ENCODE measurements at regions of chr17 and their contacts with region 1.

Region 1: DNA sequence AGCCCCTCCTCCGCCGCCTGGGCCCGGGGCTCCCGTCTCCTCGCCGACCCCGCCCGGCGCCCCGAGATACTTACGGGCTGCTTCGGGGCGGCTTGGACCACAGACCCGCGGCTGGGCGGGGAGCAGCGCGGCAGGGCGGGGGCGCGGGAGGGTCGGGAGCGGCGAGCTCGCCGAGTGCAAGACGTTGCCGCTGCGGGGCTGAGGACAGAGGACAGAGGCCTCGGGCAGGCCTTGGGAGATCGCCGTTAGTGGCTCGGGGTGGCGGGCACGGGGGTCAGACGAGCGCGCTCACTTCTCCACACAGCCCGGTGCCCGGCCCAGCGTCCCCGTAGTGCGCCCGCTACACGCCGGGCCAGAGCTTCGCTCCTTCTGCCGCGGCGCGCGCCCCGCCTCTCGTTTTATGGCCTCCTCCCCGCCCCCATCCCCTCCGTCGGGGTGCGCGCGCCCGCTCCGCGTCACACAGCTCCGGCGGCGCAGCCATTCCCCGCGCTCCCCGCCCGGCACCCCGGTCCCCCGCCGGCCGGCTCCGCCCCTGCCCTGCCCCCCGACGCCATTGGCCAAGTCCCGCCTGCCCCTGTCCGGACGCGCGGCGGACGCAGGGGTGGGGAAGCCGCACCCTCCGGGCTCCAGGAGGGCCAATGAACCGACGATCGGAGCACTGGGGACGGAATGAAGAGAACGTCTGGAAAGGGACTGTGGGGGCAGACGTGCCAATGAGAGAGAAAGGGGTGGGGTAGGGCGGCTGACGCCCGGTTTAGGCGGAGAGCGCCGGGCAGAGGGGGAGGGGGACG is at the start of gene TOB1:
- H3K4me3 Mint-ChIP-seq: peak within 1 kb of the TSS; percentile 94
- H3K27ac Mint-ChIP-seq: peak within 1 kb of the TSS; percentile 98
- H3K4me1 Mint-ChIP-seq: peaks cover 24% of the 10 kb centered on the region
- H3K27me3 Mint-ChIP-seq: no peaks in the 10 kb centered on the region

Region 2: DNA sequence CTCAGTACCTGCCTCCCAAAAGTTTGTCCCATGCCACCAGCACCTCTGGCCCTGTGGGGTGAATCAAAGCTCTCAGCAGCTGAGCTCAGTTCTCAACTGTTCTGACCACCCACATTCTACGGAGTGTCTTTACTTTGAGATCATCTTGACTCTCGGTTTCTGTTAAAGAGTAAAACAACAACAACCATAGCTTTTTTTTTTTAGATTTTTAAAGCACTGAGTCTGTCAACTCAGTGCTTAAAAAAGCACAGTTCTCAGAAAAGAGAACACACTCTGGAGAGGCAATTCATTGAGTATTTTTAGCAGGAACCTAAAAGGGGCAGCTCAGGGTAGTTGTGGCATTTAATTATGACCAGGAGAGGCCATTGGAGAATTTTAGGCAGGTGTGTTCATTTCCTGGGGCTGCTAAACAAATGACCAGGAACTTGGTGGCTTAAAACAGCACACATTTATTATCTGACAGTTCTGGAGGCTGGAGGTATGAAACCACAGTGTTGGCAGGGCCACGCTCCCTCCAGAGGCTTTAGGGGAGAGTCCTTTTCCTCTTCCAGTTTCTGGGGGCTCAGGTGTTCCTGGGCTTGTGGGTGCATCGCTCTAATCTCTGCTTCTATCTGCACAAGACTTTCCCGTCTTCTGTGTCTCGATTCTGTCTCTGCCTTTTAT is 37.5 kb before region 1 on chr17:
- intact Hi-C with region 1: no loop called
- H3K4me3 Mint-ChIP-seq: no peak overlapping the region
- H3K27ac Mint-ChIP-seq: peak overlapping the region; percentile 70
- H3K4me1 Mint-ChIP-seq: peaks cover 40% of the 10 kb centered on the region
- H3K27me3 Mint-ChIP-seq: no peaks in the 10 kb centered on the region

Region 3: DNA sequence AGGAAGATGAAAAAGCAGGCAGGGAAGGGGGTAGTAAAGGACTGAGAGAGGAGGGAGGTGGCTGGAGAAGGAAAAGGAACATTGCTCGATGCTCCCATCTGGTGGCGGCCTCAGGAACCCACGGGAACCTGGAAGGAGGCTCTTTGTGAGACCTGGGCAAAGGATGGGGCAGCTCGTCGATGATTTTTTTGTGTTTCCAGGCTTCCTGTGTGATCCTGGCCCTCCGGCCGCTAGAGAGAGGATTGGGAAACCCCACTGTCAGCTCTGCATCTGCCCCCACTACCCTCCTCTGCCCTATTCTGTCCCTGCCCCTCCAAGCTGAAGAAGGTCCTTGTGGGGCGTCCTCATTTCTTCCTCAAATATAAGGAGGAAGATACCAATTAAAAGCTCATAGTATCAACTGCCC is 24.2 kb before region 1 on chr17:
- intact Hi-C with region 1: no loop called
- H3K4me3 Mint-ChIP-seq: no peak overlapping the region
- H3K27ac Mint-ChIP-seq: no peak overlapping the region
- H3K4me1 Mint-ChIP-seq: peaks cover 8% of the 10 kb centered on the region
- H3K27me3 Mint-ChIP-seq: no peaks in the 10 kb centered on the region

Region 4: GRCh38 chr17:50853015-50853615 is 13.1 kb before region 1 on chr17:
- intact Hi-C with region 1: no loop called
- H3K4me3 Mint-ChIP-seq: no peak overlapping the region
- H3K27ac Mint-ChIP-seq: peak overlapping the region; percentile 81
- H3K4me1 Mint-ChIP-seq: peaks cover 39% of the 10 kb centered on the region
- H3K27me3 Mint-ChIP-seq: no peaks in the 10 kb centered on the region

Region 5: DNA sequence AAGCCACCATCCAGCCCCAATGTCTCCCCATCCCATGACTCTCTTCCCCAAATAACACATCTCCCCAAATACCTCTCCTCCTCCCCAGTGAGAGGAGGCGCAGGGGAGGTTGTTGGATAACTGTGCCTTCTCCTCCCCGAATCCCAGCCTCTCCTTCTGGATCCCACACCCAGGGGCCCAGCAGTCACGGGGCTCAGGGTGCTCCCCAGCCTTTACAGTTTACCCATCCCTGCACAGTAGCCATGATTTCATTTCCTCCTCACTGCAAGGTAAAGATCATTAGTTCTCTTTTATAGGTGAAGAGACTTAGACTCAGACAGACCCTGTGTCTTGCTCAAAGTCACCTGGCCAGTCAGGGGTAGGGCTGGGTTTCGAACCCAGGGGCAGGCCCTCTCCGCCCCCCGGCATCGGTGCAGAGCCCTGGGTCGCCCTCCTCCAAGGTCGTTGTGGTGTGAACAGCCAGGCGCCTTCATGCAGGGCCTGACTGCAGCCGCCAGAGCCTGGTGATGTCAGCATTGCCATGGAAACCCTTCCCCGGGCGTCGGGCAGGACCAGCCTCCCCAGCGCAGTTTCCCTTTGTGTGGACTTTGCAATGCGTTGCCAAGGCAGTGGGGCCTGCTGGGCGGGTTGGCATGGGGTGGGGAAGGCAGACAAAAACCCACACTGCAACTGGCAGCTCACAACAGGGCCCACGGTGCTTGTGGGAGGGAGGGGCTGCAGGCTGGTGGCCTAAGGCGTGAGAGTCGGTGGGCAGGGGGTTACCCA is 53.3 kb after region 1 on chr17:
- intact Hi-C with region 1: loop called (anchors 5 kb)
- H3K4me3 Mint-ChIP-seq: peak overlapping the region; percentile 21
- H3K27ac Mint-ChIP-seq: peak overlapping the region; percentile 77
- H3K4me1 Mint-ChIP-seq: peaks cover 54% of the 10 kb centered on the region
- H3K27me3 Mint-ChIP-seq: peaks cover 7% of the 10 kb centered on the region

Region 6: GRCh38 chr17:50931144-50931908 is 65.1 kb after region 1 on chr17:
- intact Hi-C with region 1: loop called (anchors 5 kb)
- H3K4me3 Mint-ChIP-seq: peak overlapping the region; percentile 66
- H3K27ac Mint-ChIP-seq: peak overlapping the region; percentile 71
- H3K4me1 Mint-ChIP-seq: peaks cover 74% of the 10 kb centered on the region
- H3K27me3 Mint-ChIP-seq: peaks cover 10% of the 10 kb centered on the region

Region 7: DNA sequence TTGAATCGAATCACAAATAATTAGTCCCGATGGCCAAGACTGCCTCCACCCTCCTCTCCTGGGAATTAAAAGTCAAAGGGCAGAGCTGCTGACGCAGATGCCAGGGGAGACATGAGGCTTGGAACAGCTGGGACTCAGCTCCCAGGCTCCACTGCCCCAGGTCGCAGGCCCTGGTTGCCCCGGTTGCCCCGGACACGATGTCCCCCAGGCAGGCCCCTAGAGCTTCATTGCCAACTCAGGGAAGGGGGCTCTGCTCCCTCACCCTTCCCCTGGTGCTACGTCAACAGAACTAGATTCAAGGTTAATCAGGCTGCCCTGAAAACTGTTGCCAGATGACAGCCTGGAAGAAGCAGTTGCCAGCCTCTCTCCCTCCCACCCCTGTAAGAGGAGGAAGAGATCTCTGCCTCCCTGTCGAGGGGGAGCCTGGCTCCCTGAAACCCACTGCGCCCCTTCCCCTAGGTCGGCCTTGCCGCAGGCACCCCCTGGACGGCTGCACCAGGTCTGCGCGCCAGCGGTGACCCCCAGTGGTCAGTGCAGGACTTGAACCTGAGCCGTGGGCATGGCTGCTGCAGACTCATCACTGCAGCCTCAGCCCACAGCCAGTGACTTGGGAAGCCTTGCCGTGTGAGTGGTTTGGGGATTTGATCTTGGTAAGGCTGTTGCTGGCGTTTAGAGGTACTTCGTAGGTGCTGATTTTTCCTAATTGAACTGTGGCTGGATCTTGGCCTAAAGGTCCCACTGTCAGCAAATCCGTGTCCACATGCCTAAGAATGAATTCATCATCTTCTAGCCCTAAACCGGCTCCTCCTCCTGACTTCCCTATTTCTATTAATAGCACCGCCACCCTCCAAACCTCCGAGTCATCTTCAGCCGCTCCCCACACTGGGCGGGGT is 84.1 kb after region 1 on chr17:
- intact Hi-C with region 1: loop called (anchors 1 kb)
- H3K4me3 Mint-ChIP-seq: no peak overlapping the region
- H3K27ac Mint-ChIP-seq: peak overlapping the region; percentile 87
- H3K4me1 Mint-ChIP-seq: peaks cover 81% of the 10 kb centered on the region
- H3K27me3 Mint-ChIP-seq: peaks cover 9% of the 10 kb centered on the region

Region 8: GRCh38 chr17:50956750-50957523 is 90.8 kb after region 1 on chr17:
- intact Hi-C with region 1: loop called (anchors 1 kb)
- H3K4me3 Mint-ChIP-seq: no peak overlapping the region
- H3K27ac Mint-ChIP-seq: no peak overlapping the region
- H3K4me1 Mint-ChIP-seq: peaks cover 39% of the 10 kb centered on the region
- H3K27me3 Mint-ChIP-seq: peaks cover 8% of the 10 kb centered on the region

Region 9: GRCh38 chr17:51120739-51121617 is 254.8 kb after region 1 on chr17 and contains the start of gene SPAG9:
- intact Hi-C with region 1: loop called (anchors 10 kb)
- H3K4me3 Mint-ChIP-seq: peak within 1 kb of the TSS; percentile 98
- H3K27ac Mint-ChIP-seq: peak within 1 kb of the TSS; percentile 99
- H3K4me1 Mint-ChIP-seq: peaks cover 58% of the 10 kb centered on the region
- H3K27me3 Mint-ChIP-seq: no peaks in the 10 kb centered on the region

Measured in dendritic cell treated with granulocyte-macrophage colony-stimulating factor and Interleukin-4, amounts not matched to agents 40 ng/mL and 50 ng/mL, for 4 days (primary cell).